A673 (cell line): ENCODE measurements at regions of chr11 and their contacts with region 1.

Region 1: GRCh38 chr11:120013325-120014270 is 124.3 kb downstream of the TRIM29 start:
- DNase-seq: peak; percentile 88
- H3K4me3 ChIP-seq: no peak overlapping the region
- H3K27ac ChIP-seq: no peak overlapping the region
- H3K4me1 ChIP-seq: peaks cover 12% of the 10 kb centered on the region
- H3K27me3 ChIP-seq: peaks cover 21% of the 10 kb centered on the region
- CTCF ChIP-seq: peak; percentile 84

Region 2: DNA sequence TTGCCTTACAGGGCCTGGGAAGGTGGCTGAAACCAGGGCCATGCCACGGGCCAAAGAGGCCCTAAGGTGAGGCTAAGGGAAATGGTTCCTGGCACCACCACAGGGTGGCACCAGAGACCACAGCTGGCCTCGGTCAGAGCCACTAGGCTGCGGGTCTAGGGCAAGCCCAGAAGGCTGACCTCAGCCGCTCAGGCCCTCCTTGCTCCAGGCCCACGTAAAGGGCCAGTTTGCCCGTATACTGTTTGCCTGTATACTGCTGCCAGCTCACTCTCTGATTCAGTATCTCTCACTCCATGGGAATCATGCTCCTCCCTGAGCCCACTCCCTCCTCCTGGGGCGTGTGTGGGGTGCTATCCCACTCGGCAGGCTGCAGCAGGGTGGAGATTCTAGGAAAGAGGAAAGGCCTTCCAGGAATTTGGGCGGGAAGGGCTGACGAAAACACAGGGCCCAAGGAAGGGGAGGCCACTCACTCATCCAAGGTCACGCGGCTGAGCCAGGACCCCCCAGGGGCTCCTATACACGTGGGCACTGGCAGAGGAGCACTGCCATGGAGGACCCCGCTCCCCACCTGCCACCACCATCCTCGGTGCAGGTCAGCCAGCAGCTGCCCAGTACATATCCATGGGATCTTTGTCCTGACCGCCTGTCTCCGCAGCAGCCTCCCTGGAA is 347.0 kb before region 1 on chr11:
- CTCF ChIA-PET with region 1: no interaction called
- POLR2A ChIA-PET with region 1: no interaction called
- intact Hi-C with region 1: loop called (anchors 5 kb)
- DNase-seq: peak; percentile 24
- H3K4me3 ChIP-seq: no peak overlapping the region
- H3K27ac ChIP-seq: no peak overlapping the region
- H3K4me1 ChIP-seq: peaks cover 3% of the 10 kb centered on the region
- H3K27me3 ChIP-seq: no peaks in the 10 kb centered on the region
- CTCF ChIP-seq: peak; percentile 88